ENCODE measurements at regions of chr10 and their contacts with region 1.

Region 1: GRCh38 chr10:6580279-6581029 is 378 bp upstream of the PRKCQ start:
- DNase-seq: peak; percentile 86
- H3K4me3 Mint-ChIP-seq: peak overlapping the region; percentile 92
- H3K27ac Mint-ChIP-seq: peak overlapping the region; percentile 99
- H3K4me1 Mint-ChIP-seq: peaks cover 39% of the 10 kb centered on the region
- H3K27me3 Mint-ChIP-seq: no peaks in the 10 kb centered on the region

Region 2: GRCh38 chr10:5977471-5978229 is 602.8 kb before region 1 on chr10 and contains the start of gene IL15RA:
- CTCF ChIA-PET with region 1: no interaction called
- intact Hi-C with region 1: loop called (anchors 10 kb)
- DNase-seq: peak; percentile 91
- H3K4me3 Mint-ChIP-seq: peak within 1 kb of the TSS; percentile 97
- H3K27ac Mint-ChIP-seq: peak within 1 kb of the TSS; percentile 97
- H3K4me1 Mint-ChIP-seq: peaks cover 24% of the 10 kb centered on the region
- H3K27me3 Mint-ChIP-seq: no peaks in the 10 kb centered on the region
- total RNA-seq, gene IL15RA: 14.7 to 16.3 TPM

Region 3: GRCh38 chr10:6348096-6348874 is 232.2 kb before region 1 on chr10:
- CTCF ChIA-PET with region 1: no interaction called
- intact Hi-C with region 1: no loop called
- DNase-seq: peak; percentile 94
- H3K4me3 Mint-ChIP-seq: peak overlapping the region; percentile 63
- H3K27ac Mint-ChIP-seq: peak overlapping the region; percentile 96
- H3K4me1 Mint-ChIP-seq: peaks cover 58% of the 10 kb centered on the region
- H3K27me3 Mint-ChIP-seq: no peaks in the 10 kb centered on the region

Region 4: DNA sequence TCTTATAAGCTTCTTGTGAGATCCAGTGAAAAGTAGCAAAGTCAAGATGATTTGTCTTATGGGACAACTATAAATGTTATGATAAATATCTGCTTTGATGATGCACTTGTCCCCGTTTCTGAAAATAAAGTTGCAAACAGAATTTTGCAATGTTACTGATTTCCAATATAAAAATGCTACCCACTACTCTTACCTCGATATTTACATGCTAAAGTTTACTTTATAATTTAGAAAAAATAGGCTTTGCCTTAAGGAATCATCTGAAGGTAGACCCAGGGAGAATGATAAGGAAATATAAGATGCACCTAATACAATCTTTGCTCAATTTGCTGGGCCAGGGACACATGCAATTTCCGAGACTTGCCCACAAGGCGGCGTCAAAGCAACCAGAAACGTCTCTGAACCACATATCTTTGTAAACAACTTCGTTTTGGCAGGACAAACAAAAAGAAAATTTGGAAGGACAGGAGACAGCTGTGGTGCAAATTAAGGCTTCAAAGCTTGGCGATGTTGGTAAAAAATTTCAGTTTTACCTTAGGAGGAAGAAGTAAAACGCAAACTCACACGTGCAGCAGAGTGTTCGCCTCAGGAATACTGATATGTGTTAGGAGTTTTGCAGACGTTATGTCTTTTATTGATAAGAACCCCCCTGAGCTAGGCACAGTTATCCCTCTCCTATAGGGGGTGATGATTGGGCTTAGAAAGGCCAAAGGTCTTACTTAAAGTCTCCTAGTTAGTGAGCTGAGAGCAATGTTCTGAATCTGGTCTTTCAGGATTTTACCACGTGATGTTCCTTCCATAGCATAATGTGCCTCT is 134.7 kb before region 1 on chr10:
- CTCF ChIA-PET with region 1: interaction called, 20 read pairs
- intact Hi-C with region 1: loop called (anchors 1 kb)
- DNase-seq: peak; percentile 80
- H3K4me3 Mint-ChIP-seq: no peak overlapping the region
- H3K27ac Mint-ChIP-seq: no peak overlapping the region
- H3K4me1 Mint-ChIP-seq: peaks cover 37% of the 10 kb centered on the region
- H3K27me3 Mint-ChIP-seq: no peaks in the 10 kb centered on the region

Region 5: GRCh38 chr10:6542999-6543430 is 37.4 kb before region 1 on chr10:
- CTCF ChIA-PET with region 1: interaction called, 6 read pairs
- intact Hi-C with region 1: loop called (anchors 1 kb)
- DNase-seq: peak; percentile 67
- H3K4me3 Mint-ChIP-seq: peak overlapping the region; percentile 87
- H3K27ac Mint-ChIP-seq: peak overlapping the region; percentile 99
- H3K4me1 Mint-ChIP-seq: peaks cover 74% of the 10 kb centered on the region
- H3K27me3 Mint-ChIP-seq: no peaks in the 10 kb centered on the region

Region 6: DNA sequence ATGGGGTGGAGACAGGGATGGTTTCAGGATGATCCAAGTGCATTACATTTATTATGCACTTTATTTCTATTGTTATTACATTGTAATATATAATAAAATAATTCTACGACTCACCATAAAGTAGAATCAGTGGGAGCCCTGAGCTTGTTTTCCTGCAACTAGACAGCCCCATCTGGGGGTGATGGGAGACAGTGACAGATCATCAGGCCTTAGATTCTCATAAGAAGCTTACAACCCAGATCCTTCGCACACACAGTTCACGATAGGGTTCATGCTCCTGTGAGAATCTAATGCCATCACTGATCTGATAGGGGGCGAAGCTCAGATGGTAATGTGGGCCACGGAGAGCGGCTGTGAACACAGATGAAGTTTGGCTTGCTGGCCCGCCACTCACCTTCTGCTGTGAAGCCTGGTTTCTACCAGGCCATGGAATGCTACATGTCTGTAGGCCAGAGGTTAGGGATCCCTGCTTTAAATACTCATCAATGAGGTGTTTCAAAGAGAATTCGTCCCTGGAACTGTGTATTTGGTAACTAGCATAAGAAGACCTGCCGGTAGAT is 20.9 kb after region 1 on chr10:
- CTCF ChIA-PET with region 1: interaction called, 50 read pairs
- intact Hi-C with region 1: loop called (anchors 1 kb)
- DNase-seq: peak; percentile 66
- H3K4me3 Mint-ChIP-seq: peak overlapping the region; percentile 51
- H3K27ac Mint-ChIP-seq: peak overlapping the region; percentile 88
- H3K4me1 Mint-ChIP-seq: peaks cover 71% of the 10 kb centered on the region
- H3K27me3 Mint-ChIP-seq: no peaks in the 10 kb centered on the region

Region 7: DNA sequence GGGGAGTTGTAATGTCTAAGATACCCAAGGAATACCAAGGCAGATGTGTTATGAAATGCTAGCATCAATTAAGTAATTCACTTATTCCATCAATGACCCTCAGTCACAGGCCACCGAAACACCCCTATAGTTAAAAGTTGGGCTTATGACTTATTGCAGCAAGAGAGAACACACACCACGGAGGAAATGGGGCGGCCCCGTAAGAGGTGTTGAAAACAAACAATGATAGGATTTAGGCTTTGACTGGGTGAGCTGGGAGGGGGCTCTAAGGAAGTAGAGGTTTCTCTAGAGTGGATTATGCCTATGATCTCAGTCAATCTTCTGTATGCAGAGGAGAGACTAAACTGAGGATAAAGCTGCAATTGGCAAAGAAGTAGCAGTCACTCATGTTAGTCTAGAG is 45.0 kb after region 1 on chr10:
- CTCF ChIA-PET with region 1: no interaction called
- intact Hi-C with region 1: no loop called
- DNase-seq: peak; percentile 68
- H3K4me3 Mint-ChIP-seq: no peak overlapping the region
- H3K27ac Mint-ChIP-seq: no peak overlapping the region
- H3K4me1 Mint-ChIP-seq: peaks cover 26% of the 10 kb centered on the region
- H3K27me3 Mint-ChIP-seq: no peaks in the 10 kb centered on the region

Region 8: GRCh38 chr10:6667679-6668270 is 87.3 kb after region 1 on chr10:
- CTCF ChIA-PET with region 1: interaction called, 8 read pairs
- intact Hi-C with region 1: loop called (anchors 1 kb)
- DNase-seq: peak; percentile 77
- H3K4me3 Mint-ChIP-seq: no peak overlapping the region
- H3K27ac Mint-ChIP-seq: no peak overlapping the region
- H3K4me1 Mint-ChIP-seq: peaks cover 14% of the 10 kb centered on the region
- H3K27me3 Mint-ChIP-seq: no peaks in the 10 kb centered on the region

Measured in activated naive CD4-positive, alpha-beta T cell treated with anti-CD3 and anti-CD28 coated beads for 36 hours (primary cell).